Activated CD4-positive, alpha-beta memory T cell treated with anti-CD3 and anti-CD28 coated beads for 36 hours (primary cell): ENCODE measurements at regions of chr19 and their contacts with region 1.

Region 1: GRCh38 chr19:43934985-43935708 is at the start of gene ZNF45:
- DNase-seq: peak; percentile 92
- H3K4me3 Mint-ChIP-seq: peak within 1 kb of the TSS; percentile 93
- H3K27ac Mint-ChIP-seq: peak within 1 kb of the TSS; percentile 81
- H3K4me1 Mint-ChIP-seq: peaks cover 9% of the 10 kb centered on the region
- H3K27me3 Mint-ChIP-seq: no peaks in the 10 kb centered on the region
- total RNA-seq, gene ZNF45: 7.7 to 9.6 TPM

Region 2: DNA sequence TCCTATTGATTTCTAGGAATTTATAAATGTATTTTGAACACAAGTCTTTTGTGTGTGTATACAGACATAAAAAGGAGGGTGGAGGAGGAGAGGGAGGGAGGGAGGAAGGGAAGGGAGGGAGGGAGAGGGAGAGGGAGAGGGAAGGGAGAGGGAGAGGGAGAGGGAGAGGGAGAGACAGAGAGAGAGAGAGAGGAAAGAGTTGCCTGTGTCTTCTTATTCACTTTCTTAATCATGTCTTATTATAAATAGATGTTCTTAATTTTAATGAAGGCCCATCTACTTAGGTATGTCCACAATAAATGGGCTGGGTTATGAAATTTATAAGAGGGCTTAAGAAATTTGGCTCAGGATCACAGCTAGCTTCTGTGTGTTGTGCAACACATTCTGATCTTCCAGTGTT is 39.4 kb before region 1 on chr19:
- CTCF ChIA-PET with region 1: no interaction called
- POLR2A ChIA-PET with region 1: no interaction called
- intact Hi-C with region 1: no loop called
- DNase-seq: no peak
- H3K4me3 Mint-ChIP-seq: no peak overlapping the region
- H3K27ac Mint-ChIP-seq: no peak overlapping the region
- H3K4me1 Mint-ChIP-seq: no peaks in the 10 kb centered on the region
- H3K27me3 Mint-ChIP-seq: no peaks in the 10 kb centered on the region

Region 3: GRCh38 chr19:43950834-43951645 is 15.9 kb after region 1 on chr19 and contains the start of gene ZNF221:
- CTCF ChIA-PET with region 1: interaction called, 4 read pairs
- POLR2A ChIA-PET with region 1: interaction called, 3 read pairs
- intact Hi-C with region 1: loop called (anchors 1 kb)
- DNase-seq: peak; percentile 82
- H3K4me3 Mint-ChIP-seq: peak within 1 kb of the TSS; percentile 92
- H3K27ac Mint-ChIP-seq: peak within 1 kb of the TSS; percentile 19
- H3K4me1 Mint-ChIP-seq: peaks cover 6% of the 10 kb centered on the region
- H3K27me3 Mint-ChIP-seq: peaks cover 15% of the 10 kb centered on the region
- total RNA-seq, gene ZNF221: 0.73 to 1.0 TPM

Region 4: GRCh38 chr19:43983912-43984686 is 49.0 kb after region 1 on chr19 and contains the start of gene ZNF155:
- CTCF ChIA-PET with region 1: no interaction called
- POLR2A ChIA-PET with region 1: no interaction called
- intact Hi-C with region 1: loop called (anchors 1 kb)
- DNase-seq: peak; percentile 84
- H3K4me3 Mint-ChIP-seq: peak within 1 kb of the TSS; percentile 97
- H3K27ac Mint-ChIP-seq: peak within 1 kb of the TSS; percentile 89
- H3K4me1 Mint-ChIP-seq: peaks cover 7% of the 10 kb centered on the region
- H3K27me3 Mint-ChIP-seq: no peaks in the 10 kb centered on the region
- total RNA-seq, gene ZNF155: 2.9 to 4.5 TPM

Region 5: DNA sequence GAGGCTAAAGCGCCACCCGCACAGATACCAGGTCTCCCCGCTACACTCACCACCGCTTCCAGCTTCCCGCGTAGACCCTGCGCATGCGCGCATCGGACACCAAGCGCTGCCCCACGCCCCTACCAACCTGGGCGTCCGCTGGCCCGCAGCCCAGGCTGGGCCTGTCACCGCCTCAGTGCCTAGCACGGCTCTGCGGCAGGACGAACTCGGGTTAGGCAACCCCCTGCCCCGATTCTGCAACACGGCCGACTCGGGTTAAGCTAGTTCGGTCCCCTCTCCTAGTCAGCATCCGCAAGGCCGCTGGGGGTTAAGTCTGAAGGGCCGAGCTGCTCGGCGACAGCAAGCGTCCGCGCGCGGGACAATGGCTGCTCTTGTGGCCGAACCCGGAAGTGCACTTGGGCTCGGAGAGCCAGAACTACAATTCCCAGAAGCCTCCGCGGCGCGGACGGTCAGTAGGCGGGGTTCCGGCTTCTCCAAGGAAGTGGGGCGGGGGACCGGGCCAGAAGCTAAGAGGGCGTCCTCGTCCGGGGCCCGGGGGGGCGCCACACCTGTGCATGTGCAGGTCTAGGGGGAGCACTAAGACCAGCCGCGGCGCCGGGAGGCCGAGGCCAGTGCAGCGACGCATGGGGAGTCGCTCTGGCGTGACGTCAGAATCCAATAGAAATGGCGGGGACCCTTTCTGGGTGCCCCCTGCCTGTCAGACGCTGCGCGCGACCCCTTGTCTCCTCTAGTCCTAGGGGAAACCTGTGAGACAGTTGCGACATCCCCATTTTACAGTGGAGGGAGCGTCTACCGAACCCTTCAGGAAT is 565.2 kb after region 1 on chr19 and contains the start of gene ZNF180:
- CTCF ChIA-PET with region 1: no interaction called
- POLR2A ChIA-PET with region 1: no interaction called
- intact Hi-C with region 1: loop called (anchors 1 kb)
- DNase-seq: peak; percentile 96
- H3K4me3 Mint-ChIP-seq: peak within 1 kb of the TSS; percentile 87
- H3K27ac Mint-ChIP-seq: peak within 1 kb of the TSS; percentile 90
- H3K4me1 Mint-ChIP-seq: peaks cover 23% of the 10 kb centered on the region
- H3K27me3 Mint-ChIP-seq: peaks cover 6% of the 10 kb centered on the region
- total RNA-seq, gene ZNF180: 4.3 to 5.4 TPM